Right cardiac atrium (tissue), 5 donors: ENCODE measurements at regions of chr9 and their contacts with region 1.

Region 1: GRCh38 chr9:26229324-26230054 is 551.2 kb upstream of the TUSC1 start:
- DNase-seq: no peak
- ATAC-seq: no peak
- H3K4me3 ChIP-seq: no peak overlapping the region
- H3K27ac ChIP-seq: no peak overlapping the region
- H3K4me1 ChIP-seq: no peaks in the 10 kb centered on the region
- H3K27me3 ChIP-seq: no peaks in the 10 kb centered on the region

Region 2: GRCh38 chr9:26240020-26240419 is 10.5 kb after region 1 on chr9:
- intact Hi-C with region 1: loop called in 1 of 4 experiments (anchors 1 kb)
- DNase-seq: no peak
- ATAC-seq: no peak
- H3K4me3 ChIP-seq: no peak overlapping the region
- H3K27ac ChIP-seq: no peak overlapping the region
- H3K4me1 ChIP-seq: no peaks in the 10 kb centered on the region
- H3K27me3 ChIP-seq: no peaks in the 10 kb centered on the region